ENCODE measurements at regions of chr10 and their contacts with region 1.

Region 1: DNA sequence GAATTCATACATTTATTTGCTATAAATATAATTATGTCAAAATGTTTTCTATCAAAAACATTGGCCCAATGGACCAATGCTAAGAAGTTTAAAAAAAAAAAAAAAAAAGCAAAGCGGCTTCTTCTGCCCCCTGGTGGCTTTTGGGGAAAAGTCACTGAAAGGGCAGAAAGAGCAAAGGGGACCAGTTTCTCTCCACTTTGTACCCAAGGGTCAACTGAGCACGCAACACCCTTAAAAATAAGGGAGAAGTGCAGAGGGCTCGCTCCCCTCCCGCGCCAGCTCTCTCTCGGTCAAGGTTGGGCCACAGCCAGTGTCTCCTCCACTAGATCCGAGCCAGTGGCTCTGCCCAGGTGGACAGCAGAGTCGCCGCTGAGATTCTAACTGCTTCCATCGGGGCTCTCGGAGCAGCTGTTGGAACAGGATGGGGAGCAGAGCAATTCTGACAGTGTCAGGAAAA is 136.4 kb upstream of the FGFR2 start:
- DNase-seq: no peak
- H3K4me3 ChIP-seq: no peak overlapping the region
- H3K27ac ChIP-seq: no peak overlapping the region
- H3K4me1 ChIP-seq: no peaks in the 10 kb centered on the region
- H3K27me3 ChIP-seq: peaks cover 10% of the 10 kb centered on the region
- CTCF ChIP-seq: peak; percentile 72

Region 2: GRCh38 chr10:120942806-120943413 is 791.7 kb before region 1 on chr10:
- intact Hi-C with region 1: loop called (anchors 2 kb)
- DNase-seq: peak; percentile 83
- H3K4me3 ChIP-seq: no peak overlapping the region
- H3K27ac ChIP-seq: no peak overlapping the region
- H3K4me1 ChIP-seq: no peaks in the 10 kb centered on the region
- H3K27me3 ChIP-seq: no peaks in the 10 kb centered on the region
- CTCF ChIP-seq: peak; percentile 77

Region 3: GRCh38 chr10:121469797-121470606 is 264.6 kb before region 1 on chr10:
- intact Hi-C with region 1: no loop called
- DNase-seq: peak; percentile 23
- H3K4me3 ChIP-seq: peak overlapping the region; percentile 14
- H3K27ac ChIP-seq: peak overlapping the region; percentile 52
- H3K4me1 ChIP-seq: no peaks in the 10 kb centered on the region
- H3K27me3 ChIP-seq: no peaks in the 10 kb centered on the region
- CTCF ChIP-seq: no peak

Region 4: GRCh38 chr10:121615435-121615793 is 119.2 kb before region 1 on chr10:
- intact Hi-C with region 1: loop called (anchors 10 kb)
- DNase-seq: no peak
- H3K4me3 ChIP-seq: no peak overlapping the region
- H3K27ac ChIP-seq: no peak overlapping the region
- H3K4me1 ChIP-seq: no peaks in the 10 kb centered on the region
- H3K27me3 ChIP-seq: no peaks in the 10 kb centered on the region
- CTCF ChIP-seq: no peak

Measured in colonic mucosa (tissue), 4 donors.